ENCODE measurements at regions of chr10 and their contacts with region 1.

Region 1: GRCh38 chr10:114937962-114938855 is at the start of gene TRUB1:
- DNase-seq: peak; percentile 95
- H3K4me3 ChIP-seq: peak within 1 kb of the TSS; percentile 73 to 90 (median 75)
- H3K27ac ChIP-seq: peak within 1 kb of the TSS; percentile 75
- H3K4me1 ChIP-seq: peaks cover 12% of the 10 kb centered on the region
- H3K27me3 ChIP-seq: peaks cover 0 to 3% of the 10 kb centered on the region in 2 experiments
- CTCF ChIP-seq: no peak
- POLR2A ChIP-seq: peak; percentile 71
- total RNA-seq, gene TRUB1: 15.1 and 16.7 TPM in 2 replicates

Region 2: GRCh38 chr10:114831186-114831867 is 106.9 kb before region 1 on chr10:
- CTCF ChIA-PET with region 1: no interaction called
- POLR2A ChIA-PET with region 1: no interaction called
- dilution Hi-C with region 1: no loop called
- intact Hi-C with region 1: no loop called
- DNase-seq: no peak
- H3K4me3 ChIP-seq: no peak overlapping the region
- H3K27ac ChIP-seq: no peak overlapping the region
- H3K4me1 ChIP-seq: peaks cover 2% of the 10 kb centered on the region
- H3K27me3 ChIP-seq: no peaks in the 10 kb centered on the region
- CTCF ChIP-seq: no peak
- POLR2A ChIP-seq: no peak

Region 3: GRCh38 chr10:114925587-114926586 is 12.3 kb before region 1 on chr10:
- CTCF ChIA-PET with region 1: interaction called, 6 read pairs
- POLR2A ChIA-PET with region 1: no interaction called
- dilution Hi-C with region 1: no loop called
- intact Hi-C with region 1: loop called (anchors 1 kb)
- DNase-seq: peak; percentile 77
- H3K4me3 ChIP-seq: peak overlapping the region in 1 of 3 experiments; percentile 15
- H3K27ac ChIP-seq: peak overlapping the region; percentile 60
- H3K4me1 ChIP-seq: peaks cover 16% of the 10 kb centered on the region
- H3K27me3 ChIP-seq: no peaks in the 10 kb centered on the region
- CTCF ChIP-seq: no peak
- POLR2A ChIP-seq: no peak